Caco-2 (cell line): ENCODE measurements at regions of chr5 and their contacts with region 1.

Region 1: GRCh38 chr5:39424736-39425637 is at the start of gene DAB2:
- DNase-seq: peak; percentile 91 to 93
- H3K4me3 ChIP-seq: peak within 1 kb of the TSS; percentile 63
- H3K4me3 Mint-ChIP-seq: peak within 1 kb of the TSS; percentile 71
- H3K27ac Mint-ChIP-seq: peak within 1 kb of the TSS; percentile 89
- H3K4me1 ChIP-seq: peaks cover 75% of the 10 kb centered on the region
- H3K4me1 Mint-ChIP-seq: peaks cover 41% of the 10 kb centered on the region
- H3K27me3 ChIP-seq: no peaks in the 10 kb centered on the region
- H3K27me3 Mint-ChIP-seq: no peaks in the 10 kb centered on the region
- CTCF ChIP-seq: peak; percentile 52 to 86
- total RNA-seq, gene DAB2: 133 and 135 TPM in 2 replicates

Region 2: DNA sequence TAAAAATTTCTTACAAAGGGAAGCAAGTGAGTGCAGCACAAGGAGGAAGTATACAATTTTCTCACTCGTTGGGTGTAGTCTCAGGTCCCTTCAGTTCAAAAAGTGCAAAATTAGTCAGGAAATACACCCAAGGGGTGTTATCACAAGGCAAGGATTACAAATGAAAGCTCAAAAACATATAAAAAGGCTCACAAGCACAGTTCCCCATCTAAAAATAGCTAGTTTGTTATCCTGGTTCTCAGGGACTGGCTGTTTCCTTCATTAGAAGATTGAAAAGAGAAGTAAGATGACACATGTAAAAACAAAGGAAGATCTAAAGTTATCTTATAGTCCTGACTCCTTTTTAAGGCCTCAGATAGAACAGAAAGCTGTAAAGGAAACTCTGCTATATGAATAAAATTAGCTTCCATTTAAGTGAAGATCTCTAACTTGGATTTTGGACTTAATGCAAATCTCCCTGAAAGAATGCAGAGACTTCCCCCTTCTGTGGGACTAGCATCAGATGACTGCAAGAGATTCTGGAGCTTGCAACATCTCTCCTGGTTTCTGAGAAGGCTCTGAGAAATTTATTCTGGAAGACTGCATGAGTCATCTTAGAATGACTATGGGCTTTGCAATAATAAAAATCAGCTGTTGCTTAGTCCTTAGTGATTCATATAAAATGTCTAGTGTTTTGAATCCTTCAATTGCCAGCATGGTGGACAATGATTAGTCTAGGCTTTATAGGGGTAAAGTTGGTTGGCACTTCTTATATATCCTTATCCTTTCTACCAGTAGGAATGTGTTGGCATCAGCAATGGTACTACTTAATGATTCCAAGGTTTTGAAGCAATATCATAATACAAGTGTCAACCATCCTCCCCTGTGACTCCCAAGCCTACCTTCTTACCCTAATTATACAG is 25.6 kb before region 1 on chr5:
- CTCF ChIA-PET with region 1: interaction called, 26 read pairs
- POLR2A ChIA-PET with region 1: interaction called, 63 read pairs
- intact Hi-C with region 1: loop called (anchors 1 kb)
- DNase-seq: peak; percentile 64 to 70
- H3K4me3 ChIP-seq: no peak overlapping the region
- H3K4me3 Mint-ChIP-seq: peak overlapping the region; percentile 23
- H3K27ac Mint-ChIP-seq: peak overlapping the region; percentile 92
- H3K4me1 ChIP-seq: peaks cover 50% of the 10 kb centered on the region
- H3K4me1 Mint-ChIP-seq: peaks cover 40% of the 10 kb centered on the region
- H3K27me3 ChIP-seq: no peaks in the 10 kb centered on the region
- H3K27me3 Mint-ChIP-seq: no peaks in the 10 kb centered on the region
- CTCF ChIP-seq: no peak

Region 3: DNA sequence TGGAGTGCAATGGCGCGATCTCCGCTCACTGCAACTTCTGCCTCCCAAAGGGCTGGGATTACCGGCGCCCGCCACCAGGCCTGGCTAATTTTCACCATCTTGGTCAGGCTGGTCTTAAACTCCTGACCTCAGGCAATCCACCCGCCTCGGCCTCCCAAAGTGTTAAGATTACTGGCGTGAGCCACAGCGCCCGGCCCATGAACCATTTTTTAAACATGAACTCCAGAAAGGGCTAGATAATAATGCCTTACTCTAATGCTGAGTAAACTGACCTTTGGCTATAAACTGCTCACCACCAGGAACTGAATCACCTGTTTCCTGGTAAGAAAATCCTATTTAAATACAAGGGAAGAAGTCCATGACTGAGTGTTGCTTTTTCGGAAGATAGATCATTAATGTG is 23.0 kb after region 1 on chr5:
- CTCF ChIA-PET with region 1: interaction called, 4 read pairs
- POLR2A ChIA-PET with region 1: interaction called, 3 read pairs
- intact Hi-C with region 1: loop called (anchors 1 kb)
- DNase-seq: peak; percentile 54 to 77
- H3K4me3 ChIP-seq: no peak overlapping the region
- H3K4me3 Mint-ChIP-seq: peak overlapping the region; percentile 31
- H3K27ac Mint-ChIP-seq: peak overlapping the region; percentile 48
- H3K4me1 ChIP-seq: peaks cover 54% of the 10 kb centered on the region
- H3K4me1 Mint-ChIP-seq: peaks cover 13% of the 10 kb centered on the region
- H3K27me3 ChIP-seq: no peaks in the 10 kb centered on the region
- H3K27me3 Mint-ChIP-seq: no peaks in the 10 kb centered on the region
- CTCF ChIP-seq: no peak

Region 4: GRCh38 chr5:39526914-39527477 is 102.0 kb after region 1 on chr5:
- CTCF ChIA-PET with region 1: no interaction called
- POLR2A ChIA-PET with region 1: interaction called, 10 read pairs
- intact Hi-C with region 1: loop called (anchors 5 kb)
- DNase-seq: peak; percentile 66 to 67
- H3K4me3 ChIP-seq: no peak overlapping the region
- H3K4me3 Mint-ChIP-seq: peak overlapping the region; percentile 32
- H3K27ac Mint-ChIP-seq: peak overlapping the region; percentile 83
- H3K4me1 ChIP-seq: peaks cover 53% of the 10 kb centered on the region
- H3K4me1 Mint-ChIP-seq: peaks cover 35% of the 10 kb centered on the region
- H3K27me3 ChIP-seq: no peaks in the 10 kb centered on the region
- H3K27me3 Mint-ChIP-seq: no peaks in the 10 kb centered on the region
- CTCF ChIP-seq: no peak